ENCODE measurements at regions of chr15 and their contacts with region 1.

Region 1: DNA sequence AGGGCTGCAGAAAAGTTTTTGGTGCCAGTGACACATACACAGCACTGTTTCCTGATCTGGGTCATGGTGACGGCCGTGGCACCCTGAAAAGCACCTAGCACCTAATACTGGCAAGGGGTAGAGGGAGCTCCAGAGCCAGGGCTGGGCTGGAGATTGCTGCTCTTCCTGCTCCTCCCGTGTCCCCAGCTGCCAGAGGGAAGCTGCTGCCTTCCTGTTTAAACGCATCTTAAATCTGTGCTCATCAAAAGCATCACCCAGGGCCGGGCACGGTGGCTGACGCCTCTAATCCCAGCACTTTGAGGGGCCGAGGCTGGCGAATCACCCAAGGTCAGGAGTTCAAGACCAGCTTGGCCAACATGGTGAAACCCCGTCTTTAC is 156.7 kb upstream of the MEF2A start:
- DNase-seq: peak; percentile 13
- ATAC-seq: peak; percentile 93
- H3K4me3 ChIP-seq: no peak overlapping the region
- H3K27ac ChIP-seq: no peak overlapping the region
- H3K4me1 ChIP-seq: no peaks in the 10 kb centered on the region
- H3K27me3 ChIP-seq: no peaks in the 10 kb centered on the region
- CTCF ChIP-seq: peak; percentile 86

Region 2: DNA sequence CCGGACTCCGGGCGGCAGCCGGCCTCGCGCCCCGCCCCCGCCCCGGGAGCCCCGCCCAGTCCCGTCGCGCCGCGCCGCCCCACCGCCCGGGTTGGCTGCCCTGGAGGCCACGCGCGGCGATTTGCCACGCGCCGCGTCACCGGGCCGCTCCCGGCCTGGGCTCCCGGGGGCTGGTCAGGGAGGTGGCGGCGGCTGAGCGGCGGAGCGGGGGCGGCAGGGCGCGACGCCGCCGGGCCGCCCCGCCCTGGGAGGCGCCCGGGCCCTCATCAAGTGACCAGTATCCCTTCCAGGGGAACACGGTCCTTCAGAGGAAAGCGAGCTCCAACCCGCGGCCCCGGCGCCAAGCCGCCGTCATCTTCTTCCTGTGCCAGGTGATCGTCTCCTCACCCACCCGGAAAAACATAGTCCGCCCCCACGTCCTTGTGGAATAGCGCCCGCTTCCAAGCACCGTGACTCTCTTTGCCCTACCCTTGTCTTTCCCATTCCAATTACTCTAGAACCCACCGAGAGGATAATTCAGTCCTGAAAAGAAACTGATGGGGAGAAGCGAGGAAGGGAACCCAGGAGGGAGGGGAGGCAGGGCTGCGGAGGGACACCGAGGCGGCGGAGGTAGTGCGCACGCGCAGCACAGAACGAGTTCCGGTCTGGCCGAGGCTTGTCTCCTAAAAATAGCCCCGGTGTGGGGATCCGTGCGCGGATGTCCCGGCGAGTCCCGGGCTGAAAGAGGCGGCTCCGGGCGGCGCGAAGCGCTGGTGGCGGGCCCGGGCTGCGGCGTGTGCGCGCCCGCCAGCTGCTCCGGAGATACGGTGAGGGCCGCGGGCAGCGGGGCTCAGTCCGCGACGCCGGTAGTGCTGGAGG is 156.4 kb after region 1 on chr15 and contains the start of gene MEF2A:
- CTCF ChIA-PET with region 1: no interaction called
- POLR2A ChIA-PET with region 1: no interaction called
- in situ Hi-C with region 1: no loop called
- intact Hi-C with region 1: loop called (anchors 10 kb)
- DNase-seq: peak; percentile 57
- ATAC-seq: peak; percentile 88
- H3K4me3 ChIP-seq: peak within 1 kb of the TSS; percentile 69 to 96
- H3K27ac ChIP-seq: peak within 1 kb of the TSS; percentile 97
- H3K4me1 ChIP-seq: peaks cover 13% of the 10 kb centered on the region
- H3K27me3 ChIP-seq: no peaks in the 10 kb centered on the region
- CTCF ChIP-seq: no peak
- total RNA-seq, gene MEF2A: 31.1 TPM

Measured in Panc1 (cell line).